Naive thymus-derived CD8-positive, alpha-beta T cell (primary cell): ENCODE measurements at regions of chr3 and their contacts with region 1.

Region 1: GRCh38 chr3:129112308-129113052 is 9.1 kb downstream of the RAB43 start:
- DNase-seq: no peak
- ATAC-seq: peak; percentile 53 to 64
- H3K4me3 Mint-ChIP-seq: peak overlapping the region in 9 of 10 donors; percentile 32 to 85 (median 60)
- H3K27ac Mint-ChIP-seq: peak overlapping the region; percentile 76 to 97 (median 89)
- H3K4me1 Mint-ChIP-seq: peaks cover 35 to 90% (median 83%) of the 10 kb centered on the region in 4 donors
- H3K27me3 Mint-ChIP-seq: no peaks in the 10 kb centered on the region

Region 2: GRCh38 chr3:129101370-129102138 is 10.9 kb before region 1 on chr3:
- POLR2A ChIA-PET with region 1: interaction called, 140 read pairs
- DNase-seq: no peak
- ATAC-seq: peak in 1 of 2 donors; percentile 16
- H3K4me3 Mint-ChIP-seq: peak overlapping the region in 9 of 10 donors; percentile 16 to 72 (median 58)
- H3K27ac Mint-ChIP-seq: peak overlapping the region; percentile 71 to 91 (median 89)
- H3K4me1 Mint-ChIP-seq: peaks cover 53 to 92% (median 85%) of the 10 kb centered on the region in 4 donors
- H3K27me3 Mint-ChIP-seq: no peaks in the 10 kb centered on the region

Region 3: GRCh38 chr3:129218742-129219141 is 106.3 kb after region 1 on chr3:
- POLR2A ChIA-PET with region 1: no interaction called
- DNase-seq: no peak
- ATAC-seq: no peak
- H3K4me3 Mint-ChIP-seq: no peak overlapping the region
- H3K27ac Mint-ChIP-seq: peak overlapping the region in 2 of 10 donors; percentile 63 to 74
- H3K4me1 Mint-ChIP-seq: no peaks in the 10 kb centered on the region
- H3K27me3 Mint-ChIP-seq: no peaks in the 10 kb centered on the region

Region 4: DNA sequence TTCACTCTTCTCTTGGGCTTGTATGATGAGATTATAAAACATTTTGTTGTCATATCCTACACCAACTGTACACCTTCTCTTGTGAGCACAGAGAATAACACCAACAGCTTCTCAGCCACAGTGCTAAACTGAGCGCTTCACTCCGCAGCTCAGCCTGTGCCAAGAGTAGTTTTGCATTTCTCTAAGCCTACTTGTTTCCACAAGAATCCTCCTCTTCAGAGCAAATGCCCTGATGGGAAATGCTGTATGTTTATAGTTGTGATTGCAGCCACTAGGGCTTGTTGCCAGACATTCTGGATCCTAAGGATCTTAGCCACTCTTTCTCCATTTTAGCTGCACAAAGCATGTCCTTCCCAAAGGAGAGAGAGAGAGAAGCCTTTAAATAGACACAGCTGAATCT is 632.8 kb after region 1 on chr3:
- POLR2A ChIA-PET with region 1: no interaction called
- DNase-seq: no peak
- ATAC-seq: no peak
- H3K4me3 Mint-ChIP-seq: no peak overlapping the region
- H3K27ac Mint-ChIP-seq: no peak overlapping the region
- H3K4me1 Mint-ChIP-seq: peaks cover 8 to 23% (median 17%) of the 10 kb centered on the region in 4 donors
- H3K27me3 Mint-ChIP-seq: no peaks in the 10 kb centered on the region